ENCODE measurements at regions of chr16 and their contacts with region 1.

Region 1: DNA sequence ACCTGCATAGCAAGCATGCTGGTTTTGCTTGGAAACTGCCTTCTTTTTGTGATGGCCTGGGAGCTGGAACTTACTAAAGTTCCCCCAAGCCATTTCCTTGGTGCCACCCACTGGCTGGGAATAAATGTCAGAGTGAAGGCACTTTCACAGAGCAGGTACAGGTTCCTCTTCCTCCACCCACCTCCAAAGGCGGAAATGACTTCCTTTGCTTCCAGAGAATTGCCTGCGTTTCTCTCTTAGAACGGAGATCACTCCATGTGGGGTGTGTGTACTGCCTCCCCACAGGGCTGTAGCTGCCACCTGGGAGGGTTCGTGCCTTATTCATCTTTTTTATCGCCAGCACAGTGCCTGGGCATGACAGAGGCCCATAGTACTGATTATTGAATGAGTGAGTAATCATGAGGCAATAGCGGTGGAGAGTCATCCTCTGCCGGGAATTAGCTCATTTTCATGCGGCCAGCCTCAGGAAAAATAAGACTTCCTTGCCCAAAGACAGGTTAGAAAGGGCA is 32.2 kb upstream of the HAS3 start:
- DNase-seq: no peak
- H3K4me3 ChIP-seq: no peak overlapping the region
- H3K27ac ChIP-seq: peak overlapping the region; percentile 91 to 93 (median 91)
- H3K4me1 ChIP-seq: peaks cover 31 to 40% of the 10 kb centered on the region in 2 donors
- H3K27me3 ChIP-seq: no peaks in the 10 kb centered on the region
- CTCF ChIP-seq: no peak
- POLR2A ChIP-seq: no peak

Region 2: DNA sequence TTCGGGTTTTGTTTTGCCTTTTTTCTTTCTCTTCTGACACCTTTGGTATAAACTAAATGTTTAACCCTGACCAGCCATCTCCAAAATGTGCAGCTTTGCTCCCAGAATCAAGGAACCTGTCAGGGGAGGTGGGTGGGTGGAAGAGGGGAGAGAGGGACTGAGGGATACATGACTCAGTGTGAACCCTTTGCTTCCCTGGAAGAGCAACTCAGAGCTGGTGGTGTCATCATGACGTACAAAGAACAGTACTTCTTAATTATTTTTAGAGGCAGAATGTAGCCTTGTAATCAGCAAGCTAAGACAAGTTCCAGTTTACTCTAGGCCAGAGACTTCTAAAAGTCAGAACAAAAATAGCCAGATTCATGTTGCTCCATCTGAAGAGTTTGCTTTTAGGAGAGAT is 87.4 kb before region 1 on chr16:
- intact Hi-C with region 1: loop called (anchors 10 kb)
- DNase-seq: no peak
- H3K4me3 ChIP-seq: no peak overlapping the region
- H3K27ac ChIP-seq: peak overlapping the region in 2 of 3 donors; percentile 69 to 70
- H3K4me1 ChIP-seq: peaks cover 0 to 16% of the 10 kb centered on the region in 2 donors
- H3K27me3 ChIP-seq: no peaks in the 10 kb centered on the region
- CTCF ChIP-seq: no peak
- POLR2A ChIP-seq: no peak